Colonic mucosa (tissue), 4 donors: ENCODE measurements at regions of chr15 and their contacts with region 1.

Region 1: GRCh38 chr15:89496155-89497098 is at the start of gene RHCG:
- DNase-seq: no peak
- H3K4me3 ChIP-seq: peak within 1 kb of the TSS; percentile 38
- H3K27ac ChIP-seq: no peak within 1 kb of the TSS
- H3K4me1 ChIP-seq: peaks cover 3% of the 10 kb centered on the region
- H3K27me3 ChIP-seq: peaks cover 11% of the 10 kb centered on the region
- CTCF ChIP-seq: peak; percentile 14
- total RNA-seq, gene RHCG: 0.48 to 0.67 TPM

Region 2: GRCh38 chr15:89556413-89557262 is 60.2 kb after region 1 on chr15:
- intact Hi-C with region 1: loop called (anchors 5 kb)
- DNase-seq: peak; percentile 63
- H3K4me3 ChIP-seq: no peak overlapping the region
- H3K27ac ChIP-seq: no peak overlapping the region
- H3K4me1 ChIP-seq: no peaks in the 10 kb centered on the region
- H3K27me3 ChIP-seq: peaks cover 5% of the 10 kb centered on the region
- CTCF ChIP-seq: peak; percentile 82